ENCODE measurements at regions of chr2 and their contacts with region 1.

Region 1: DNA sequence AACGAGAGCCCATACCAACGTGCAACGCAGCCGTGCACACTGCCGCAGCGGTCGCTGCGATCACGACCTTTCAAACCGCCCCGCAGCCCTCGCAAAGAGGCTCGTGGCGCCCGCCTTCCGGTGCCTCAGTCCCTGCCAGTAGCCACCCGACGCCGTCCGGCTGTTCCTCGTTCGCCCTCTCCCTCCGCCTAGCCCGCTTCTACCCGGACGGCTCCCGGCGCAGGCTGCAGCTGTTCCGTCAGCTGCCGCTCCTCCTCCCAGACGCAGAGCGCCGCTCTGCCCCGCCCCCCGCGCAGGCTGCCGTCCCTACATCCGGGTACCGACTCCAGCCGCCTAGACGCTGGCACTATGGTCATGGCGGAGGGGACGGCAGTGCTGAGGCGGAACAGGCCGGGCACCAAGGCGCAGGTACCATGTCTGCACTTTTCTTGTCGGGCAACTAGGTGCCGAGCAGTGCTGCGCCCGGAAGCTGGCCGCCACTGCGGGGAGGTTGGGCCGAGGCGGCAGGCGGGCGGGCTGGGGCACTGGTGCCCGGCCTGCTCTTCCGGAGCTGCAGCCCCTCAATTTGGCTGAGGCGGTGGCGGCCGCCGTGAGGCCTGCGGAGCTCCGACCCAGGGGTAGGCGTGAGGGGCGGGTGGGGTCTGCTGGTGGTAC is at the start of gene MOB4:
- DNase-seq: peak; percentile 96
- H3K4me3 Mint-ChIP-seq: peak within 1 kb of the TSS; percentile 92
- H3K27ac Mint-ChIP-seq: peak within 1 kb of the TSS; percentile 88
- H3K4me1 Mint-ChIP-seq: peaks cover 24% of the 10 kb centered on the region
- H3K27me3 Mint-ChIP-seq: no peaks in the 10 kb centered on the region
- total RNA-seq, gene MOB4: 18.9 to 19.5 TPM

Region 2: GRCh38 chr2:197453161-197453914 is 62.5 kb before region 1 on chr2 and contains the start of gene COQ10B:
- CTCF ChIA-PET with region 1: no interaction called
- POLR2A ChIA-PET with region 1: interaction called, 5 read pairs
- intact Hi-C with region 1: loop called (anchors 1 kb)
- DNase-seq: peak; percentile 100
- H3K4me3 Mint-ChIP-seq: peak within 1 kb of the TSS; percentile 99
- H3K27ac Mint-ChIP-seq: peak within 1 kb of the TSS; percentile 100
- H3K4me1 Mint-ChIP-seq: peaks cover 39% of the 10 kb centered on the region
- H3K27me3 Mint-ChIP-seq: no peaks in the 10 kb centered on the region
- total RNA-seq, gene COQ10B: 21.5 TPM

Measured in activated CD4-positive, alpha-beta memory T cell treated with anti-CD3 and anti-CD28 coated beads for 36 hours (primary cell).